ENCODE measurements at regions of chr11 and their contacts with region 1.

Region 1: DNA sequence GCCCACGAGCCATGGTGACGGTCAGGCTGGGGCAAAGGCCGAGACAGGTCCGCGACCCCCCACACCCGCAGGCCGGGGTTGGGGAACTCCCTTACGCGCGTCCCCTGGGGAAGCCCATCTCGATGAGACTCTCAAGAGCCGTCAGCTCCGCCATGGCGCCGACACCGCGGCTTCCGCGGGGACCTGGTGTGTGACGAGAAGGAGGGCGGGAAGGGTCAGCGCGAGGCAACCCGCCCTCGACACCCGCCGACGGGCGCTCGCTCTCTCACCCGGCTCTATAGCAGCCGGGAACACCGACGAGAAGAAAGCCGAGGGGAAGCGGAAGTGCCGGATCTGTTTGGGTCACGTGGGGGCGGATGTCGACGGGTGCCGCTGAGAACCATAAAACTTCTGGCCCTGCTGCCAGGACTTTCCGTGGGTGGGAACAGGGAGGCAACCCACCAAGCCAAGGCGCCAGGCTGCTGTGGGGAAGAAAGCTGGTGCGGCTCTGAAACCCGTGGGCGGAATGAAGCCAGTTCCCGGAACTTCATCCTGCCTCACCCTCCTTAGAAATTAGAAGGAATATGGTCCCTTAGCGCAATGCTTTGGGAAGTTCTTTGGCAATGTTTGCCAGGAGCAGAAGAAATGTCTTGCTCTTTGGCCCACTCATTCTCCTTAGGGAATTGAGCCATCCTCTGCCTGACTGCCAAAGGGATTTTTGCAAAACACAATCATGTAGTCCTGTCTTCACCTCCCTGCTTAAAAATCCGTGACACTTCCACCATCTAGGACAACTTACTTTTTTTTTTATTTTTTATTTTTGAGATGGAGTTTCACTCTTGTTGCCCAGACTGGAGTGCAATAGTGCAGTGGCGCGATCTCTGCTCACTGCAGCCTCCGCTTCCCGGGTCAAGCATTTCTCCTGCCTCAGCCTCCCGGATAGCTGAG is at the start of gene UBXN1:
- DNase-seq: peak in 1 of 2 experiments; percentile 88
- H3K4me3 ChIP-seq: peak within 1 kb of the TSS; percentile 78 to 98 (median 88)
- H3K27ac ChIP-seq: peak within 1 kb of the TSS; percentile 68
- H3K4me1 ChIP-seq: peaks cover 2 to 8% (median 4%) of the 10 kb centered on the region in 4 experiments; a peak in 4 of 7 replicates
- H3K27me3 ChIP-seq: no peaks in the 10 kb centered on the region
- CTCF ChIP-seq: no peak; a peak in 1 of 4 replicates
- EP300 ChIP-seq: no peak
- POLR2A ChIP-seq: peak; percentile 26 to 79
- RAD21 ChIP-seq: no peak
- total RNA-seq, gene UBXN1: 104 and 114 TPM in 2 replicates

Region 2: DNA sequence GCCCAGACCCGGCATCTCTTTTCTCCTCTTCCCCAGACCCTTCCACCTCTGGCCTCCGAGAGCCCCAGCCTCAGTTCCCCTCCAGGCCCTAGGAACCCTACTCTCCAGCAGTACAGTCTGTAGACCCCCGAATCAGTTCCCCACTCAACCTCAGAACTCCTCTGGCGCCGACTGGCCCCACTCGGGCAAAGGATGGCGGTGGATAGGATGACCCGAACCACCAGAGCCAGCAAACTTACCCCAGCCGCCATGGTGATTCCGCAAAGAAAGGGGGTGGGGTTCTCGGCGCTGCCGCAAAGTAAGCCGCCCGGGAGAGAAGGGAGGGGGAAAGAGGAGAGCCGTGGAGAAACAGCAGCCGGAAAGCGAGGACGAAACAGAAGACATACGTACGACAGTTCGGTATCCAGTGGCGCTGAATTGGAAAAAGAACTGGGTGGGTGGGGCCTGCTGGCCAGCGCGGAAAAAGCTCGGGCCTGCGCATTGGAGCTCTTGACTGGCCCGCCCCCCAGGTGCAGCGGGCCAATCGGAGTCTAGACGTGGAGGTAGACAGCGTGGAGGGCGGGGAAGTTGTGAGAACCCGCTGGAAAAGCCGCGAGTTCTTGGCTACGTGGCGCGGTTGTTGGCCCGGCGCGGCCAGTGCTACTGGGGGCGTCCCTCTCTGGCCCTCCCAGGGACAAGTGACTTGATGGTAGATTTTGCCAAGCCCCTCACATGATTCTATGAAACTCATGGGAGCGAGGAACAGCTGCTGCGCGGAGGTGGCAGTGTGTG is 105.3 kb before region 1 on chr11 and contains the start of gene EEF1G:
- CTCF ChIA-PET with region 1: no interaction called
- POLR2A ChIA-PET with region 1: interaction called, 10 read pairs
- DNase-seq: peak; percentile 96 to 99
- H3K4me3 ChIP-seq: peak within 1 kb of the TSS; percentile 90 to 100 (median 91)
- H3K27ac ChIP-seq: peak within 1 kb of the TSS; percentile 75
- H3K4me1 ChIP-seq: peaks cover 0 to 11% (median 7%) of the 10 kb centered on the region in 4 experiments; a peak in 4 of 7 replicates
- H3K27me3 ChIP-seq: no peaks in the 10 kb centered on the region
- CTCF ChIP-seq: no peak
- EP300 ChIP-seq: peak in 1 of 2 experiments; percentile 48; a peak in 1 of 3 replicates
- POLR2A ChIP-seq: peak; percentile 64 to 86
- RAD21 ChIP-seq: no peak
- total RNA-seq, gene EEF1G: 1,622 and 1,627 TPM in 2 replicates